Activated T-helper 2 cell treated with anti-CD3 and anti-CD28 coated beads, Interferon-gamma antibody, Interleukin-2, Interleukin-4, amounts not matched to agents 10 μg/mL and 5 μg/mL and 100 μg/mL, durations not matched to agents 14 hours and 24 hours and 36 hours (primary cell): ENCODE measurements at regions of chr3 and their contacts with region 1.

Region 1: DNA sequence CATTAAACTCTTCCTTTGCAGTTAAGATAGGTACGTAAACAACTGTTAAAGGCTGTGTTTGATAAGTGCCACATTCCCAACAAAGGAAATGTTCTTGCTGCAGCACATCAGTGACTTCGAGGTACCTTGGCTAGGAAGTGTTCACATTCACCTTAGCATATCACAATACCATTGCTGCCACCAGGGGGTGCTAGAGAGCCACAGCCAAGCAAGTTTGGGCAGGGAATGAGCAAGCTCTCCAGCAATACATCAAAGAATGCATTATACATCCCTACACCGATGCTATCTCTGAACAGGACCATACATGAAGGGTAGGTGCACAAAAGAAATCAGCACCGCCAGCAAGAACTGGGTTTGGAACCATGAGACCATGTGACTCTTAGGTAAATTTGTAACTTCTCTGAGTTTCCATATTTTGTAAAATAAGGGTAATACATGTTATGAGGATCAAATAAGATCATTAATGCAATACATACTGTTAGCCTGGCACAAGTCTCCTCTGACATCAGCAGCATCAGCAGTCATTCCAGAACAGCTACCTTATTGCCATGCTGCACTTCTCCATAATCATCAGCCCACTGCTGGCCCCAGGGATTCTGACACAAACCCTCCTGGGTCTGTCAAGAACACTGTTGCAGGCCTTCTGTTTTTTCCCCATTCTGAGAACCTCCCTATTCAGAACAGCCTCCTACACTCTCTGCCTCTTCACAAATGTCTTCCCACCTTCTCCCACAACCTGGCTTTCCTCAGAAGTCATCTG is 37.6 kb downstream of the RYK start:
- DNase-seq: peak; percentile 62
- H3K4me3 Mint-ChIP-seq: no peak overlapping the region
- H3K27ac Mint-ChIP-seq: no peak overlapping the region
- H3K4me1 Mint-ChIP-seq: peaks cover 10% of the 10 kb centered on the region
- H3K27me3 Mint-ChIP-seq: peaks cover 6% of the 10 kb centered on the region

Region 2: GRCh38 chr3:134186391-134186790 is 26.7 kb before region 1 on chr3:
- intact Hi-C with region 1: no loop called
- DNase-seq: no peak
- H3K4me3 Mint-ChIP-seq: no peak overlapping the region
- H3K27ac Mint-ChIP-seq: no peak overlapping the region
- H3K4me1 Mint-ChIP-seq: no peaks in the 10 kb centered on the region
- H3K27me3 Mint-ChIP-seq: no peaks in the 10 kb centered on the region

Region 3: DNA sequence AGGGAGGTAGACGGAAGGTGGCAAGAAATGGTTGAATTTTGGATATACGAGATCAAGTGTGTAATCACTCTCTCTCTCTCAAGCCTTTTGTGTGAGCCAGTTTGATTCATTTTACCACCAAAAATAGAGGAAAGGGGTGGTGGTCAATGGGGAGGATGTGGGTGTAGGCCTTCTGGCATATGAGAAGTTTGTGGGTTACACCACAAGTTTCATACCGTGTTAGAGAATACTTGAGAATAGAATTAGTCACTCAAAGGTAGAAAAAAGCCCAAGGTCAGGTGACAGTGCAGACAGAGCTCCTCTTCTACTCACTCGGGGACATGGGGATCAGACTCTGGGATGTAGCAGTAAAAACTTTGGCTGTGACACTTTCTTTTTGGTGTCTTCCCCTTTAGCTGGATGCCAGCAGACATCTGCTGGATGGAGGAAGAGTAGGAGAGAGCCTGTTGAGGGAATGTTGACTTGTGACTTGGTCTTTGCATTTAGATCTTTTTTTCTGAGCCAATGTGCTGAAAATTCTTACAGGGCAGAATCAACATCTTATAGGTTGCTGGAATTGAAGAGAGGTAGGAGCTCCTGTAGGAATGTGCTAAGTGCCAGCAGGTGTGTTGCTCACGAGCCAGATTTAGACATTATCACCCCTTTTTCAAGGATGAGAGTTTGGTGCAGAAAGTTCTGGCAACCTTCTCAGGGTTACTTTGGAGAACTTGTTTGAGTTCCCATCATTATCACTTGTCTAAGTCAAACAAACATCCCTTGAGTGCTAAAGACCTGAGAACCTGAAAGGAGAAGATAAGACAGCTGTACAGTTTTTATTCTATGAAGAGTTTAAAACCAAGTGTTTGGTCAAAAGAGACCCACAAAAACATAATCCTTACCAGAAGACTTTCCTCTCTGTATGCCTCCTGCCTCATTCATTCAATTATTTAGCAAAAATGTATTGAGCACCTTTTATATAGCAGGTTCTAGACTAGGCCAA is 81.5 kb after region 1 on chr3:
- intact Hi-C with region 1: loop called (anchors 1 kb)
- DNase-seq: peak; percentile 57
- H3K4me3 Mint-ChIP-seq: no peak overlapping the region
- H3K27ac Mint-ChIP-seq: no peak overlapping the region
- H3K4me1 Mint-ChIP-seq: no peaks in the 10 kb centered on the region
- H3K27me3 Mint-ChIP-seq: peaks cover 46% of the 10 kb centered on the region

Region 4: DNA sequence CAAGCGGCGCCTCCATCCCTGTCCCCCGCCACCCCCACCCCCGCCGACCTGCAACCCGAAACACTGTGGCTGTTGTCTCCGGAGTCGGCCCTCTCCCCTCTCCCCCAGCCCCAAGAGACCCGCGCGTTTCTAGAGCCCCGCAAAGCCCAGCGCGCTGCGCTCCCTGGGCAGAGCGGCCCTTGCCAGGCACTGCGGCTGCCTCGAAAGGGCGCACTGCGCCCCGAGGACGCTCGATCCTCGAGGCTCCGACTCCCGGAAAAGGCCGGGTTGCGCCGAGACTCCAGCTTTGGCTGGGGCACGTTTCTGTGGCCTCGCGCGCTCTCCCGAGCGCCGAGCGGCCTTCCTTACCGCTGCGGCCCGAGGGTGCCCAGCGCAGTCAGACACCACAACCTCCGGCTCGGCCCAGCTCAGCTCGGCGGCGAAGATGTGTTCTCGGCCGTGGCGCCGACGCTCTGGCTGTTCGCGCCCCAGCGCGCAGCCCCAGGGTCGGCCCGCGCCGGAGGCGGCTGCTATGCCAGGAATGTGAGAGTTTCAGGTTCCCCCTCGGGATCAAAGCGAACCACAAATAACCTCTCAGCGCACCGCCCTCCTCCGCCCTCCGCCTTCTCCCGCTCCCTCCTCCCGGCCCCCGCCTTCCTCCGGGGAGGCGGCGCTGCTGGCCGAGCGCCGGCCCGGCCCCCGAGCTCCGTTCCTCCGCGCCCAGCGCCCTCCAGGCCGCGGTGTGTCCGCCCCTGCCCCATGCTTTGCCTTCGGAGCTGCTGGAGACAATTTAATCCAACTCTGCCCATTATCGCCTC is 161.1 kb after region 1 on chr3 and contains the start of gene AMOTL2:
- intact Hi-C with region 1: loop called (anchors 10 kb)
- DNase-seq: no peak
- H3K4me3 Mint-ChIP-seq: peak within 1 kb of the TSS; percentile 73
- H3K27ac Mint-ChIP-seq: no peak within 1 kb of the TSS
- H3K4me1 Mint-ChIP-seq: peaks cover 5% of the 10 kb centered on the region
- H3K27me3 Mint-ChIP-seq: peaks cover 46% of the 10 kb centered on the region
- total RNA-seq, gene AMOTL2: not detected in 2 replicates